GM12878 (cell line): ENCODE measurements at regions of chr17 and their contacts with region 1.

Region 1: GRCh38 chr17:48011405-48012150 is 26.0 kb downstream of the COPZ2 start:
- DNase-seq: no peak
- ATAC-seq: peak; percentile 92
- H3K4me3 ChIP-seq: peak overlapping the region; percentile 75
- H3K27ac ChIP-seq: no peak overlapping the region
- H3K4me1 ChIP-seq: peaks cover 7% of the 10 kb centered on the region
- H3K27me3 ChIP-seq: no peaks in the 10 kb centered on the region
- CTCF ChIP-seq: peak; percentile 61 to 76 (median 72)
- EP300 ChIP-seq: no peak
- POLR2A ChIP-seq: no peak
- RAD21 ChIP-seq: peak; percentile 52; the same call in 1 of the 2 replicates

Region 2: DNA sequence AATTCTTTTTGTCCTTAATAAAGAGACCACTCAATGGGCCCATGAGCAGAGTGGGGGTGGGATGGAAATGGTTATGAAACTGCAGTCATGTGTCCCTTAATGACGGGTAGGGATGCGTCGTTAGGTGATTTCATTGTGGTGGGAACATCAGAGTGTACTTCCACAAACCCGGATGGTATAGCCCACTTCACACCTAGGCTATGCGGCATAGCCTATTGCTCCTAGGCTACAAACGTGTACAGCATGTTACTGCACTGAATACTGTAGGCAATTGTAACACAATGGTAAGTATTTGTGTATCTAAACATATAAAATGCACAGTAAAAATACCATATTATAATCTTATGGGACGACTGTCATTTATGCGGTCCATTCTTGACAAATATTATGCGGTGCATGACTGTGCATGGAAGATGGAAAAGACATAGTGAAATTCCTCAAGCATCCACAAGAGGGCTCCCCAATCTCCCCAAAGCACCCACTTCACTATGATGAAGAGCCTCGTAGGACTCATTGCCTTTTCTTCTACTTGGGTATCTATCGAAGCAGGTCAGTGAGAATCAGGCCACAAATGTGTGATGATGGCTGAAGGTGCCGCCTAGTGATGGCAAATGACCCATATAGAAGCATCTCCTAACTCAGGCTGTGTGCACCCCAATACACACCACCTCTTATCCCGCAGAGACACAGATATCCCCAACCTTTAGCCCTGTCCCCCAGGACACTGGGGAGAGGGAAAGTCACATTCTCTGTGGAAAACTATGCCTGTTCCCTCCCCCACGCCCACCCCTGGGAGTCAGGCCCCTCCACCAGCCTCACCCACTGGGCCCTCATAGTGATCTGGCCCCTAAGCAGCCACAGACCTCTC is 235.0 kb before region 1 on chr17:
- CTCF ChIA-PET with region 1: no interaction called
- POLR2A ChIA-PET with region 1: no interaction called
- RAD21 ChIA-PET with region 1: no interaction called
- SMC1A ChIA-PET with region 1: no interaction called
- in situ Hi-C with region 1: no loop called
- intact Hi-C with region 1: loop called (anchors 5 kb)
- DNase-seq: no peak
- ATAC-seq: peak; percentile 93
- H3K4me3 ChIP-seq: no peak overlapping the region
- H3K27ac ChIP-seq: no peak overlapping the region
- H3K4me1 ChIP-seq: no peaks in the 10 kb centered on the region
- H3K27me3 ChIP-seq: peaks cover 0 to 4% of the 10 kb centered on the region in 2 experiments; a peak in 2 of 4 replicates
- CTCF ChIP-seq: peak; percentile 69 to 77 (median 71)
- EP300 ChIP-seq: no peak
- POLR2A ChIP-seq: no peak
- RAD21 ChIP-seq: peak; percentile 64

Region 3: DNA sequence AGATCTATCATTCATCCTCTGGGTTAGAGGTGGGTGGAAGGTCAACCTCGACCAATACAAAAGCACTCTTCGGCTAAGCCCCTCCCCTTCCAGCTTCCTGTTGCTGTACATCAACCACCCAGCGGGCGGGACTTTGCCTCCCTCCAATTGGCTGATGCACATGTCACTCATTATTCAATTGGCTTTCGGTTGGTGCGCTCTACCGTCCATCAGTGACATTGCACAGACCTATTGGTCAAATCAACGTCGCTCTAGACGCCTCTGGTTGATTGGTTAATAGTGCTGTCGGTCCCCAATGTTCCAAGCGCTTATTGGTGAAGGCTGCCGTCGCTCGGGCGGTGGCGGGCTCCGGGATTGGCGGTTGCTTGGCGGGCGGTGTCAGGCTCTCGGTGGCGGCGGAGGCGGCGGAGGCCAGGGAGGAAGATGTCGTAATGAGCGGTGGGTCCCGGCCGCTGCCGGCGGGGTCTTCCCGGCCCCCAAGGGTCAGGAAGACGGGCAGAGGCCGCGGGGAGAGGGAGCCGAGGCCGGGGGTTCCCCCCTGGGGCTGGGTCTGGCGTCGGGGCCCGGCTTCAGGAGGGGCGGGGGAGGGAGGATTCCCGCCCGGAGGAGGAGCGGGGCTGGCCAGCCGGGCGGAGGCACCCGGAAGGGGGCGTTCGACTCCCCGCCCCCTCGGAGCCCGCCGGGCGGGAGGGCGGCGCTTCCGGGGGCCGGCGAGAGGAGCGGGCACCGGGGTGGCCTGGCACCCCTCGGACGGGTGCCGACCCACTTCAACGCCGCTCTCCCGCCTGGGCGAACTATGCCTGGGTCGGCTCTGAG is 115.5 kb before region 1 on chr17 and contains the start of gene SP2:
- CTCF ChIA-PET with region 1: interaction called, 3 read pairs
- POLR2A ChIA-PET with region 1: interaction called, 3 read pairs
- RAD21 ChIA-PET with region 1: no interaction called
- SMC1A ChIA-PET with region 1: interaction called, 26 read pairs
- in situ Hi-C with region 1: no loop called
- intact Hi-C with region 1: no loop called
- DNase-seq: peak; percentile 100
- ATAC-seq: peak; percentile 94
- H3K4me3 ChIP-seq: peak within 1 kb of the TSS; percentile 95
- H3K27ac ChIP-seq: peak within 1 kb of the TSS; percentile 92
- H3K4me1 ChIP-seq: peaks cover 16% of the 10 kb centered on the region
- H3K27me3 ChIP-seq: no peaks in the 10 kb centered on the region
- CTCF ChIP-seq: no peak; a peak in 2 of 6 replicates
- EP300 ChIP-seq: no peak
- POLR2A ChIP-seq: peak; percentile 80
- RAD21 ChIP-seq: no peak
- polyA plus RNA-seq, gene SP2: 1.2 to 1.9 TPM

Region 4: DNA sequence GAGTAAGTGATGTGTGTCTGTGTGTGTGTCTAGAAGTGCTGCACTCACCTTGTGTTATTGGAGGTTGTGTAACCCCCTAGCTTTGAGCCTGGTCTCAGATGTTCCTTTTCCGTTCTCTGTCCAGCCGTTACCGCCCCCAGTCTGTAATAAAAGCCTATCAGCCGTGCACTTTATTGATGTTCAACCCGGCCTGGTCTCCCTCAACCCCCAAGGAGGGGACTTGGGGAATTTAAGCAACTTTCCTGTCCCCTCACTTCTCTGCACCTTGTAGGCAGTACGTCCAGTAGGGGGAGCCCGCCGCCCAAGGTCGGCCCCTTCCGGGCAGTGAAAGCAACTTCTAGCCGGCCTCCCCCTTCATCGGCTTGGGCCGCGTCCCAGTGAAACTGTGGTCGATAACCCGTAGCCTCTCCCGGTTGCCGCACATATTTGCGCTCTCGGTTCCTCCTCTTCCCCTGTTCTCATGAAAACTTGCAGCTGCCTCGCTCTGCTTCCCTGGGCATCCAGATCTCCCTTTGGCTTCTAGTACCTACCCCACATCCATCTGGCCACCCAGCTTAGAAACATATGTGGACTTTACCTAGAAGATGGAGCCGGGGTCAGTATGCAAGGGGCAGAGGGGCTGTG is 62.3 kb before region 1 on chr17:
- CTCF ChIA-PET with region 1: interaction called, 419 read pairs
- POLR2A ChIA-PET with region 1: interaction called, 18 read pairs
- RAD21 ChIA-PET with region 1: interaction called, 126 read pairs
- SMC1A ChIA-PET with region 1: interaction called, 158 read pairs
- in situ Hi-C with region 1: no loop called
- intact Hi-C with region 1: no loop called
- DNase-seq: peak; percentile 53
- ATAC-seq: peak; percentile 92
- H3K4me3 ChIP-seq: peak overlapping the region; percentile 41; the same call in 1 of the 2 replicates
- H3K27ac ChIP-seq: peak overlapping the region; percentile 74
- H3K4me1 ChIP-seq: peaks cover 44% of the 10 kb centered on the region
- H3K27me3 ChIP-seq: no peaks in the 10 kb centered on the region
- CTCF ChIP-seq: peak; percentile 91 to 94 (median 94)
- EP300 ChIP-seq: peak in 1 of 2 experiments; percentile 45; a peak in 1 of 4 replicates
- POLR2A ChIP-seq: no peak
- RAD21 ChIP-seq: peak; percentile 86

Region 5: GRCh38 chr17:47970704-47971463 is 40.7 kb before region 1 on chr17 and contains the start of gene CDK5RAP3:
- CTCF ChIA-PET with region 1: interaction called, 454 read pairs
- POLR2A ChIA-PET with region 1: interaction called, 18 read pairs
- RAD21 ChIA-PET with region 1: interaction called, 80 read pairs
- SMC1A ChIA-PET with region 1: interaction called, 332 read pairs
- in situ Hi-C with region 1: no loop called
- intact Hi-C with region 1: no loop called
- DNase-seq: peak; percentile 97
- ATAC-seq: peak; percentile 98
- H3K4me3 ChIP-seq: peak within 1 kb of the TSS; percentile 92
- H3K27ac ChIP-seq: peak within 1 kb of the TSS; percentile 83
- H3K4me1 ChIP-seq: peaks cover 15% of the 10 kb centered on the region
- H3K27me3 ChIP-seq: no peaks in the 10 kb centered on the region
- CTCF ChIP-seq: peak; percentile 97 to 100 (median 99); a peak in 5 of 6 replicates
- EP300 ChIP-seq: no peak
- POLR2A ChIP-seq: peak; percentile 97
- RAD21 ChIP-seq: peak; percentile 45
- polyA plus RNA-seq, gene CDK5RAP3: 69.4 to 160 TPM

Region 6: GRCh38 chr17:47987240-47987835 is 24.2 kb before region 1 on chr17:
- CTCF ChIA-PET with region 1: interaction called, 454 read pairs
- POLR2A ChIA-PET with region 1: interaction called, 3 read pairs
- RAD21 ChIA-PET with region 1: interaction called, 107 read pairs
- SMC1A ChIA-PET with region 1: interaction called, 332 read pairs
- in situ Hi-C with region 1: loop called (anchors 5 kb)
- intact Hi-C with region 1: no loop called
- DNase-seq: no peak
- ATAC-seq: no peak
- H3K4me3 ChIP-seq: no peak overlapping the region
- H3K27ac ChIP-seq: no peak overlapping the region
- H3K4me1 ChIP-seq: peaks cover 13% of the 10 kb centered on the region
- H3K27me3 ChIP-seq: no peaks in the 10 kb centered on the region
- CTCF ChIP-seq: no peak
- EP300 ChIP-seq: no peak
- POLR2A ChIP-seq: no peak
- RAD21 ChIP-seq: no peak